ENCODE measurements at regions of chr10 and their contacts with region 1.

Region 1: GRCh38 chr10:91389636-91390512 is 20.3 kb upstream of the HECTD2 start:
- H3K4me3 Mint-ChIP-seq: no peak overlapping the region
- H3K27ac Mint-ChIP-seq: no peak overlapping the region
- H3K4me1 Mint-ChIP-seq: no peaks in the 10 kb centered on the region
- H3K27me3 Mint-ChIP-seq: peaks cover 18% of the 10 kb centered on the region

Region 2: GRCh38 chr10:90484518-90484917 is 905.4 kb before region 1 on chr10:
- intact Hi-C with region 1: no loop called
- H3K4me3 Mint-ChIP-seq: no peak overlapping the region
- H3K27ac Mint-ChIP-seq: no peak overlapping the region
- H3K4me1 Mint-ChIP-seq: no peaks in the 10 kb centered on the region
- H3K27me3 Mint-ChIP-seq: no peaks in the 10 kb centered on the region

Region 3: GRCh38 chr10:91551856-91552255 is 162.0 kb after region 1 on chr10:
- intact Hi-C with region 1: loop called (anchors 2 kb)
- H3K4me3 Mint-ChIP-seq: no peak overlapping the region
- H3K27ac Mint-ChIP-seq: no peak overlapping the region
- H3K4me1 Mint-ChIP-seq: no peaks in the 10 kb centered on the region
- H3K27me3 Mint-ChIP-seq: peaks cover 4% of the 10 kb centered on the region

Region 4: GRCh38 chr10:91632671-91633550 is 243.0 kb after region 1 on chr10 and contains the start of gene PPP1R3C:
- intact Hi-C with region 1: loop called (anchors 2 kb)
- H3K4me3 Mint-ChIP-seq: peak within 1 kb of the TSS; percentile 67
- H3K27ac Mint-ChIP-seq: no peak within 1 kb of the TSS
- H3K4me1 Mint-ChIP-seq: peaks cover 8% of the 10 kb centered on the region
- H3K27me3 Mint-ChIP-seq: peaks cover 39% of the 10 kb centered on the region

Region 5: DNA sequence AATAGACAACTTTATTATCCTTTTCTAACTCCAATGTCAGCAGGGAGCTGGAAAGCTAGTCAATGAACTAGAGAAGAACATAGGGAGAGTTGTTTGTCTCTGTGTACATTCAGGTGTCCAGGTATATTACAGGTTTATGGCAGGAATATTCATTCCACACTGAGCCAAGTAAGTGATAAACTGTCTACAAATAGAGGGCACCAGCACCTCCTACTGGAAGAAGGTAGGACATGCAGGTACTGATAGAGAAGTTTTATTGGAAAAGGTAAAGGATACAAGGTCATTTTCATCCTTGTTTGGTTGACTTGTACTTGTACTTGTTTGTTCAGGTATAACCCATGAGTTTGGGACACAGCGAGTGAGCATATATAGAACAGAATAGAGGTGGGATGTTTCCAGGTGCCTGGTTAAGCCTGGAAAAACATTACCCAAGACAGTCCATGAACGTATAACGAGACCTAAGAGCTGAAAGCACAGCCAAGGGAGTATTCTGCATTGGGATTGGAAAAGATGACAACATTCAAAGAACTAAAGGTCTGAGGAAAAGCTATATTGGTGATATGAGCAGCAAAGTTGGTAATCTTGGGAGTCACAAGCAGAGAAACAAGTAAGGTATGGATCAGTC is 304.4 kb after region 1 on chr10:
- intact Hi-C with region 1: loop called (anchors 2 kb)
- H3K4me3 Mint-ChIP-seq: no peak overlapping the region
- H3K27ac Mint-ChIP-seq: no peak overlapping the region
- H3K4me1 Mint-ChIP-seq: no peaks in the 10 kb centered on the region
- H3K27me3 Mint-ChIP-seq: no peaks in the 10 kb centered on the region

Measured in dendritic cell treated with granulocyte-macrophage colony-stimulating factor and Interleukin-4, amounts not matched to agents 40 ng/mL and 50 ng/mL, for 4 days (primary cell).